ENCODE measurements at regions of chr14 and their contacts with region 1.

Region 1: DNA sequence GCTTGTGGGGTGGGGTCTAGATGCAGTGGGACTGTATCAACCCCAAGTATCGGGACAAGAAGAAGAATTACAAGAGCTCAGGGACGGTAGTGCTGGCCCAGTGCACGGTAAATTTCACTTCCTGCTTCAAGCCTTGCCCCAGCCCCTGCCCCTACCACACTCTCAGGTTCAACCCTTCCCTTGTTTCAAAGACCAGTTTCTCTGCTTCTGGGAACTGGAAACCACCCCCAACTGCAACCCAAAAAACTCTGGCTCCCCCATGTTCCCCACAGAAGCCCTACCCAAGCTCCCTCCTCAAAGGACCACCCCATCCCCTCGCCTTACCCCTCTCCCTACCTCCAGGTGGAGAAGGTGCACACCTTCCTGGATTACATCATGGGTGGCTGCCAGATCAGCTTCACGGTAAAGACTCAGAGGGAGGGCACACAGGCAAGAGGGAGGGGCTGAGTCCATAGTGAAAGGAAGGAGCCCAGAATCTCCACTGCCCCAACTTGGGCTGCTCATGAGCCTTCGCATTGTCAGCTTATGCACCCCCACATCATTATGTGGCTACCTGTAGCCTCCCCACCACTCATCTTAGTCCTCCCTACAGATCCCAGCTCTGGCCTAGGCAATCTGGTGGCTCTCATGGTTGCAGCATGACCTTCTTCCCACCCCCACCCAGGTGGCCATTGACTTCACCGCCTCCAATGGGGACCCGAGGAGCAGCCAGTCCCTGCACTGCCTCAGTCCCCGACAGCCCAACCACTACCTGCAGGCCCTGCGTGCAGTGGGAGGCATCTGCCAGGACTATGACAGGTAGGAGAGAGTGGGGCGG is 4.3 kb downstream of the CPNE6 start:
- DNase-seq: no peak
- ATAC-seq: no peak
- H3K4me3 ChIP-seq: no peak overlapping the region
- H3K27ac ChIP-seq: no peak overlapping the region
- H3K4me1 ChIP-seq: peaks cover 8% of the 10 kb centered on the region; the same call in 1 of the 2 replicates
- H3K27me3 ChIP-seq: no peaks in the 10 kb centered on the region
- CTCF ChIP-seq: no peak

Region 2: DNA sequence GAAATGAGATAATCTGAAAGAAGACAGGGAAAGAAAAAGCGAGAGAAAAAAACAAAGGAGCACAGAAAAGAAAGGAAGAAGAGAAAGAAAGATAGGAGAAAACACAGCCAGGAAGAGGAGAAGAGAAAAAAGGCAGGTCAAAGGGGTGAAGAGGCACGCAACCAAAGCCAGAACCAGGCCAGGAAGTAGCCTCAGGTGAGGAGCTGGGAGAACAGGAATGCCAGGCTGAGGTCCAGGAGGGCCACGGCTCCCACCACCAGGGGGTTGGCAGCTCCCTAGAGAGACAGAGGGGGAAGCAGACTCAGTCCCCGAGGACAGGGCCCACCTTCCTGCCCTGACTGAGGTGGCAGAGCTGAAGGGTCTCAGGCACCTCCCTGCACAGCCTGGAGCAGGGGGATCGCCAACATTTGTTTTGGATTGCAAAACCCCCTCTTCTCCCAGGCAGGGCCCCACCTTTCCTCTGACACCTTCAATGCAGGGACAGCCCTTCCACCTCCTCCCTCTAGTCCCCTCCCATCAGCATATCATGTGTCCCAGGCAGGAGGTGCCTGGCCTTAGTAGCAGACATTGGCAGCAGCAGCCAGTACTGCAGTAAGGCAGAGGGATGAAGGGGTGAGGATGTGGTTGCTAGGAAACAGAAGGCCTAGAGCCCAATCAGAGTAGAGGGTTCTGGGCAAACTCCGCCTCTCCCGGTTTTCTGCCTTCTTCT is 506.1 kb before region 1 on chr14:
- CTCF ChIA-PET with region 1: no interaction called
- POLR2A ChIA-PET with region 1: interaction called, 12 read pairs
- in situ Hi-C with region 1: no loop called
- intact Hi-C with region 1: no loop called
- DNase-seq: no peak
- ATAC-seq: peak; percentile 43; the same call in 1 of the 2 replicates
- H3K4me3 ChIP-seq: no peak overlapping the region
- H3K27ac ChIP-seq: no peak overlapping the region
- H3K4me1 ChIP-seq: peaks cover 10% of the 10 kb centered on the region
- H3K27me3 ChIP-seq: no peaks in the 10 kb centered on the region
- CTCF ChIP-seq: no peak

Region 3: DNA sequence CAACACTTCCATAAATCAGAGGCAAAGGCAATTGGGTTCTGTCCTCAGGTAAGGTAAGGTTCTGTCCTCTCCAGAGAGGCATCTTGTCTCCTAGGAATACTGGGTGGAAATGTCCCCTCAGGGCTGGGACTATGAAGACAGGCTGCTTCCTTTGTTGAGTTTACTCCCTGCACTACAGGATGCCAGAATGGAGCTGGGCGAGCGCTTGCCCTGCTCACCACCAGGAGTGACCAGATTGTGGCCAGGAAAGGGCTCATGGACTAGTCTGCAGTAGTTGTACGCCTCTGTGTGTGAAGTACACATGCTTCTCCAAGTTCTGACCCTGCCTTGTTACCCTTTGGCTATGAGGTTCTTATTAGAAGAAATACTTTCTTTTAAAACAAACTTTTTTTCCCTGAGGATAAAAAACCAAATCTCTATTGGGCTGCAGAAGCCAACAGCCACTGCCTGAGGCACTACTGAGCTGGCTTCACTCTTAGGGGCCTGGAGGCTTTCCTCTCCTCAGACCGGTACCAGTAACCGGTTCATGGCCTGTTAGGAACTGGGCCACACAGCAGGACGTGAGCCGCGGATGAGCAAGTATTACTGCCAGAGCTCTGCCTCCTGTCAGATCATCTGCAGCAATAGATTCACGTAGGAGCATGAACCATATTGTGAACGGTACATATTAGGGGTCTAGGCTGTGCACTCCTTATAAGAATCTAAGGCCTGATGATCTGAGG is 356.3 kb before region 1 on chr14:
- CTCF ChIA-PET with region 1: no interaction called
- POLR2A ChIA-PET with region 1: no interaction called
- in situ Hi-C with region 1: no loop called
- intact Hi-C with region 1: no loop called
- DNase-seq: no peak
- ATAC-seq: no peak
- H3K4me3 ChIP-seq: no peak overlapping the region
- H3K27ac ChIP-seq: no peak overlapping the region
- H3K4me1 ChIP-seq: no peaks in the 10 kb centered on the region
- H3K27me3 ChIP-seq: no peaks in the 10 kb centered on the region
- CTCF ChIP-seq: no peak

Region 4: GRCh38 chr14:24160850-24161804 is 85.4 kb after region 1 on chr14 and contains the start of gene IRF9:
- CTCF ChIA-PET with region 1: no interaction called
- POLR2A ChIA-PET with region 1: no interaction called
- in situ Hi-C with region 1: no loop called
- intact Hi-C with region 1: no loop called
- DNase-seq: peak; percentile 77
- ATAC-seq: peak; percentile 91
- H3K4me3 ChIP-seq: peak within 1 kb of the TSS; percentile 50 to 76
- H3K27ac ChIP-seq: peak within 1 kb of the TSS; percentile 89
- H3K4me1 ChIP-seq: peaks cover 4% of the 10 kb centered on the region
- H3K27me3 ChIP-seq: no peaks in the 10 kb centered on the region
- CTCF ChIP-seq: peak; percentile 91
- total RNA-seq, gene IRF9: 24.5 TPM

Region 5: DNA sequence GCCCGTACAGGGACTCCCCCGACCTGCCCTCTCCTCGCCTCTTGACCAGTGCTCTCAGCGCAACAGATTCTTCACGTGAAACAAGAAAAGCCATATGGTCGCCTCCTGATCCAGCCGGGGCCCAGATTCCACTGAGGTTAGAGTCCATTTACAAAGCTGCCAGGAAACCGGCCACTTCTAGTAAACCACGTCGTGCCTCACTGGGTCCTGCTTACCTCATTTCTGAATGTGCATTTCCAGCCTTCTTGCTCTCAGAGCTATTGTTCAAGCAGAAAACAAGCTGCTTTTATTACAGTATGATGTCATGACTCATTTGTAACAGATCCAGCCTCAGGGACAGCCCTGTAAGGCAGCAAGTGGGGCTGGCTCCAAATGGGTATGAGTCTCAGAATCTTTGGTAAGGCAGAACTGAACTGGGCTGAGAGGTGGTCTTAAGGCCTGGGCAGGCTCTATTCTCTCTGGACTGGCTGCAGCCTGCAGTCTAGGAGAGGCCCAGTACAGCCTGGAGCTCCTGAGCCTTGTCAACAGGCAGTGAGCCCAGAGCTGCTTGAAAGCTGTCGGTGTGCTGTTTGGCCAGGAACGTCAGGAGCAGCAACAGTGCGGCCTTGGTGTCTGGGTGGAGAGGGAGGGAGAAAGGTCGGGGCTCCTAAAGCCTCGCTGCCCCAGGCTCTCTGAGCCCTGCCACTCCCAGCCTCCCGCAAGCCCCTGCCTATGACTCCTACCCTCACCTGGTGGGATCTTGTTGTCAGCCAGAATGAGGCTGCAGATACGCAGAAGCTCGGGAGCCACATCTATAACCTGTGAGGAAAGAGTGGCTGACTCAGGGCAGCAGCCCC is 104.5 kb after region 1 on chr14:
- CTCF ChIA-PET with region 1: no interaction called
- POLR2A ChIA-PET with region 1: no interaction called
- in situ Hi-C with region 1: no loop called
- intact Hi-C with region 1: no loop called
- DNase-seq: no peak
- ATAC-seq: no peak
- H3K4me3 ChIP-seq: no peak overlapping the region
- H3K27ac ChIP-seq: no peak overlapping the region
- H3K4me1 ChIP-seq: no peaks in the 10 kb centered on the region; the same call in 1 of the 2 replicates
- H3K27me3 ChIP-seq: no peaks in the 10 kb centered on the region
- CTCF ChIP-seq: no peak

Region 6: DNA sequence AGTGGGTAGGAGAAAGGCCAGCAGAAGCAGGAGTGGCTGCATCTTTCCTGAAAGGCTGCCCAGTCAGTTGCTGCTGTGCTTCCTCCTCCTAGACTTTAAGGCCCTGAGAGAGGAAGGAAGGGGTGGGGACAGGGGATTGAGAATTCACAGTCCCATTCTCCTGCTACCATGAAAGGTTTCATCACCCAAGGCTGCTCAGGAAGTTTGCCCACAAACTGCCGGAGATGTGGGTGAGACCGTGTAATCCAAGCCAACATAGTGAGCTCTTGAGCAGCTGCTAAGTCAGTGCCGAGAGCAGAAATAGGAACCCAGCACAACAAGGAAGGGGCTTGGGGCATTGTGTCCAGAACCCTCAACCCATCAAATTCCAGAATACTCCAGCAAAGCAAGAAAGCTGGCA is 500.5 kb after region 1 on chr14 and contains the start of gene CTSG:
- CTCF ChIA-PET with region 1: no interaction called
- POLR2A ChIA-PET with region 1: no interaction called
- in situ Hi-C with region 1: no loop called
- intact Hi-C with region 1: no loop called
- DNase-seq: no peak
- ATAC-seq: no peak
- H3K4me3 ChIP-seq: no peak within 1 kb of the TSS
- H3K27ac ChIP-seq: no peak within 1 kb of the TSS
- H3K4me1 ChIP-seq: no peaks in the 10 kb centered on the region
- H3K27me3 ChIP-seq: no peaks in the 10 kb centered on the region; the same call in 1 of the 2 replicates
- CTCF ChIP-seq: no peak
- total RNA-seq, gene CTSG: not detected

Measured in Panc1 (cell line).